ENCODE measurements at regions of chr9 and their contacts with region 1.

Region 1: GRCh38 chr9:92986176-92987085 is 39.1 kb downstream of the FGD3 start:
- DNase-seq: no peak
- H3K4me3 ChIP-seq: no peak overlapping the region
- H3K27ac ChIP-seq: no peak overlapping the region
- H3K4me1 ChIP-seq: peaks cover 41% of the 10 kb centered on the region
- H3K27me3 ChIP-seq: no peaks in the 10 kb centered on the region
- CTCF ChIP-seq: peak; percentile 68

Region 2: GRCh38 chr9:92696619-92697018 is 289.8 kb before region 1 on chr9:
- CTCF ChIA-PET with region 1: no interaction called
- POLR2A ChIA-PET with region 1: no interaction called
- intact Hi-C with region 1: no loop called
- DNase-seq: no peak
- H3K4me3 ChIP-seq: no peak overlapping the region
- H3K27ac ChIP-seq: no peak overlapping the region
- H3K4me1 ChIP-seq: no peaks in the 10 kb centered on the region
- H3K27me3 ChIP-seq: no peaks in the 10 kb centered on the region
- CTCF ChIP-seq: no peak

Region 3: DNA sequence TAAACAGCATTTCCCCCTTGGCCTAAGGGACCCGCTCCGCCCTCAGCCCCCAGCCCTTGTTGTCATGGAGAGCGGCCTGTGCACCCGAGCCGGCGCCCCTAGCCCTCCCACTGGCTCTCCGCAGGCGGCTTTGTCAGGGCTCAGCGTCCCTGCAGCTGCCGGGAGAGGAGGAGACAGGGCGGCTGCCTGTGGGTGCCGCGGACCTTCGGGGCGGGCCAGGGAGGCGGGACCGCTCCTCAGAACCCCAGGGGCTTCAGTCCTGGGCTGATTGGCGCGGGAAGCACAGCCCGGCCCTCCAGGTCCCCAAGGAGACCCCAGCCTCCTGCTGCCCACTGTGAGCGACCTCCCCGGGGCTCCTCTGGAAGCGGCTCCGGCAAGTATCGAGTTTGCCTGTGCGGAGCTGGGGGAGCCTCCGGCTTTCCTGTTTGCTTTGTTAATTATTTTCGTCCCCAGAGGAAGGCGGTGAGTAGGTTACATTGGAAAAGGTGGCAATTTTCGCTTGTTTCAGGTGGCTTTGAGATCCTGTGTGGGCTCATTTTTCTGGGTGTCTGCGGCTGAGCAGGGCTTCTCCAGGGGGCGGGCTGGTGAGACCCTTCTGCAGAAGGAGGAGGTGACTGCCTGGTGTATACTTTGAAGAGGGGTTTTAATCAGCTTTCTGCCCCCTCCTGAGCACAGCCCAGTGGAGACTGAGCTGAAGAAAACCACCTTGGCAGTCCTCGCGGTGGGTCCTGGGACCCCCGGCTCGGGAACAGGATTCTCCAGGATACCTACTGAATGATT is 39.0 kb before region 1 on chr9 and contains the start of gene FGD3:
- CTCF ChIA-PET with region 1: no interaction called
- POLR2A ChIA-PET with region 1: interaction called, 18 read pairs
- intact Hi-C with region 1: no loop called
- DNase-seq: peak in 1 of 2 experiments; percentile 60
- H3K4me3 ChIP-seq: peak within 1 kb of the TSS; percentile 73
- H3K27ac ChIP-seq: no peak within 1 kb of the TSS
- H3K4me1 ChIP-seq: peaks cover 15% of the 10 kb centered on the region
- H3K27me3 ChIP-seq: no peaks in the 10 kb centered on the region
- CTCF ChIP-seq: no peak
- total RNA-seq, gene FGD3: 84.9 and 89.0 TPM in 2 replicates

Region 4: DNA sequence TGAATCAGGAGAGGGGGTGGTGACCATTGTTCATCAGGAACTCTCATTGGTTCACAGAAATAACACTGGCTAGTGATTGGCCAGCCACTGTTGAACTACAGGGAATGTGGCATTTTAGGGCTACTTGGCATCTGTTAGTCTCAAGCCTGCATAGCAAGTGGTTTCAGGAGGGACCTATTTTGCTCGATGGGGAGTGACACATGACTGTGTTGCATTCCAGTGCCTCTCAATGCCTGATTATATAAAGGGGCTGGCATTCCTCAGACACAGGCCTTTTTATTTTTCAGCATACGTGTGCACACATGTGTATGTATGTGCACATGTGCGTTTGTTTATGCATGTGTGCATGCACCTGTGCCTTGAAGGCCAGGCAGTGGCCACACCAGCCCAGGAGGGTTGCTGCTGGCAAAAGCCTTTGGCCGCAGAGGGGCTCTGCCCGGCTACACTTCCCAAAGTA is 15.9 kb before region 1 on chr9:
- CTCF ChIA-PET with region 1: interaction called, 10 read pairs
- POLR2A ChIA-PET with region 1: interaction called, 15 read pairs
- intact Hi-C with region 1: loop called (anchors 1 kb)
- DNase-seq: peak; percentile 76 to 85
- H3K4me3 ChIP-seq: no peak overlapping the region
- H3K27ac ChIP-seq: peak overlapping the region; percentile 30; the same call in 1 of the 2 replicates
- H3K4me1 ChIP-seq: peaks cover 54% of the 10 kb centered on the region
- H3K27me3 ChIP-seq: no peaks in the 10 kb centered on the region
- CTCF ChIP-seq: no peak

Region 5: GRCh38 chr9:93003552-93004407 is 17.3 kb after region 1 on chr9:
- CTCF ChIA-PET with region 1: interaction called, 12 read pairs
- POLR2A ChIA-PET with region 1: no interaction called
- intact Hi-C with region 1: no loop called
- DNase-seq: peak; percentile 58 to 72
- H3K4me3 ChIP-seq: no peak overlapping the region
- H3K27ac ChIP-seq: peak overlapping the region; percentile 62
- H3K4me1 ChIP-seq: peaks cover 13% of the 10 kb centered on the region
- H3K27me3 ChIP-seq: no peaks in the 10 kb centered on the region
- CTCF ChIP-seq: peak; percentile 79

Region 6: GRCh38 chr9:93354451-93354850 is 368.0 kb after region 1 on chr9:
- CTCF ChIA-PET with region 1: no interaction called
- POLR2A ChIA-PET with region 1: interaction called, 14 read pairs
- intact Hi-C with region 1: no loop called
- DNase-seq: peak; percentile 10 to 91
- H3K4me3 ChIP-seq: no peak overlapping the region
- H3K27ac ChIP-seq: peak overlapping the region; percentile 65
- H3K4me1 ChIP-seq: peaks cover 19% of the 10 kb centered on the region
- H3K27me3 ChIP-seq: no peaks in the 10 kb centered on the region
- CTCF ChIP-seq: no peak

Measured in PC-9 (cell line).